Mammary epithelial cell (primary cell): ENCODE measurements at regions of chr9 and their contacts with region 1.

Region 1: DNA sequence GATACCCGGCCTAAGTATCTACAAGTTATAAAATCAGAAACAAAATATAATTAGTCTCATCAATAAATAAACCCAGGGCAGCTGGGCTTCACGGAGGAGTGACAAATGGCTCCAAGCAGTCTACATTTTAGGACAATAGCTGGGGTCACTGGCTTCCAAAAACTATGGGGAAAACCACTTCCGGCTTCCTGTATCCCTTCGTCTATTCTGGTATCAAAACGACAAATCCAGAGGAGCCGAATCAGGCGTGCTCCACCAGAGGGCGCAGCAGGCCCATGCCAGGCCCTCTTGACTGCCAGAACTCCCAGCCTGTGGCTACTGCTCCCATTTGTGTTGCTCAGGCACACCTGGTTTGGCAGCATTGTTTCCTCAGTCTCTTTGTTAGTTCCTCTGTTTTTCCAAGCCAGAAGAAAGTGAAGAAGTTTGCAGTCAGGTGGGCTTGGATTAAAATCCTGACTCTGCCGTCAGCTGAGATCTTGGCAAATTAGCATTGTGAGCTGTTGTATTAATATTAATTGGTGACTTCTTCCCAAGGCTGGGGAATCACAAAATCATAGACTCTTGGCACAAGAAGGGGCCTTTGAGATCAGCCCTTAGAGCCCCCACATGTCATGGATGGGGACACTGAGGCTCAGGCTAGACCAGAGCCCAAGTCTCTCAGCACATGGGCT is 11.6 kb upstream of the RAB14 start:
- DNase-seq: peak; percentile 81
- H3K4me3 ChIP-seq: no peak overlapping the region
- H3K27ac ChIP-seq: no peak overlapping the region
- H3K4me1 ChIP-seq: peaks cover 10% of the 10 kb centered on the region
- H3K27me3 ChIP-seq: no peaks in the 10 kb centered on the region
- CTCF ChIP-seq: peak; percentile 97 to 99

Region 2: DNA sequence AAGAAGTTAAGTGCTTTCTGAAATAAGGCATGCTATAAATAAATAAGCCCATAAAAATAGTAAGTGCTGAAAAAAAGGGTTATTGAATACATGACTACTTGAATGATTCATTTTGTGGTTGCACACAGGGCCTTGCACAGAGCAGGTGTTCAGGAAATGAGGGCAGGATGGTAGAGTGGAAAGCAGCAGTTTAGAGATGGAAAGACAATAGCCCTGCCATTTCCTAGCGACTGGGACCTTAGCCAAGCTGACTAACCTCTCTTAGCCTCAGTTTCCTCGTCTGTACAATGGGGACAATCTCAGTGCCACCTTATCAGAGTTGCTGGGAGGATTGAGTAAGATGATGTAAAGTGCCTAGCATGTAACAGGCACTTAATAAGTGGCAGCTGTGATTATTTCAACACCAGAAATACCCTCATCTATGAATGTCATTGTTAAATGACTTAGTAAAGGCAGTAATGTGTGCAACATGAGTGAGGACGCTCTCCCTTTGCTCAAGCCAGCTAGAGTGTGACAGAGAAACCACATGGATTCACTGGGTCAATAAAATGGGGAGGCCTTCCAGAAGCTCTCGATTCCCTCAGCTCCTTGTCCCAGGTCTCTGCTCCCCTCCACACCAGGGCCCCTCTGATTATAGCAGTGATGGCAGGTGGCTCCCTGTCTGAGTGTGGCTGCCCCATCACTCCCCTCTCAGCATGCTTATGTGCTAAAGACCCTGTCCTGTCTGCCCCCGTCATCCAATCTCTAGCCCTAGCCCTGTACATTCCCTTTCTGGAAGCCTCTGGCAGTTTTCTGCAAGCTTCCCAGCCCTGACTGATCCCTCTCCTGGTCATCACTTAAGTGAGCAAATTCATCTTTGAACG is 320.3 kb before region 1 on chr9:
- CTCF ChIA-PET with region 1: no interaction called
- dilution Hi-C with region 1: no loop called
- in situ Hi-C with region 1: no loop called
- intact Hi-C with region 1: no loop called
- DNase-seq: peak; percentile 91
- H3K4me3 ChIP-seq: no peak overlapping the region
- H3K27ac ChIP-seq: no peak overlapping the region
- H3K4me1 ChIP-seq: peaks cover 18% of the 10 kb centered on the region
- H3K27me3 ChIP-seq: peaks cover 3% of the 10 kb centered on the region
- CTCF ChIP-seq: no peak

Region 3: GRCh38 chr9:121278535-121279261 is 65.4 kb after region 1 on chr9:
- CTCF ChIA-PET with region 1: no interaction called
- dilution Hi-C with region 1: no loop called
- in situ Hi-C with region 1: loop called in 1 of 2 experiments (anchors 10 kb)
- intact Hi-C with region 1: loop called (anchors 2 kb)
- DNase-seq: peak; percentile 98
- H3K4me3 ChIP-seq: no peak overlapping the region
- H3K27ac ChIP-seq: peak overlapping the region; percentile 90
- H3K4me1 ChIP-seq: peaks cover 76% of the 10 kb centered on the region
- H3K27me3 ChIP-seq: no peaks in the 10 kb centered on the region
- CTCF ChIP-seq: peak; percentile 82 to 88

Region 4: GRCh38 chr9:121321016-121321503 is 107.8 kb after region 1 on chr9:
- CTCF ChIA-PET with region 1: no interaction called
- dilution Hi-C with region 1: no loop called
- in situ Hi-C with region 1: loop called in 1 of 2 experiments (anchors 10 kb)
- intact Hi-C with region 1: loop called (anchors 1 kb)
- DNase-seq: no peak
- H3K4me3 ChIP-seq: no peak overlapping the region
- H3K27ac ChIP-seq: no peak overlapping the region
- H3K4me1 ChIP-seq: peaks cover 20% of the 10 kb centered on the region
- H3K27me3 ChIP-seq: no peaks in the 10 kb centered on the region
- CTCF ChIP-seq: no peak

Region 5: DNA sequence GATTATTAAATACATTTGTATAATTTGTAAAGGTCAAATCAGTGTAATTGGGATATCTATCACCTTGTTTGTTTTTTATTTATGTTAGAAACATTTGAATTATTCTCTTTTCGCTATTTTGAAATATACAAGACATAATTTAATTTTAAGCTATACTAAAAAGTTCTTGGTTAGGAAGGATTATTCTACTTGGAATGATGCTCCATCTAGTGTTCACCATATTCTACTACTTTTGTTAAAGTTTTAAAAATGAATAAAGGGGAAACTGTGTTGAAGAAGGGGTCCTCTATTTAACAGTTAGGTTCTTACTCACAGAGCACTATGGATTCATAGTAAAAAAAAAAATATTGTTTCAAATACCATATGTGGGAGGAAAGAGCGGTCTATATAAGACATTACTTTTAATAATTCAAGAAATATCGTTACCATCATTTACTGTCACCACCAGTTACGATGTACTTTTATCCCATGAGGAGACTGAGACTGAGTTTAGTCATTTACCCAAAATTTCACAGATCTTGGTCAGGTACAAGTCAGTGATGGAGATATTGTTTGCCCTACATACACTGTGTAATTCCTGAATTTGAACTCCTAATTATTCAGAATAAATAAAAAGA is 163.1 kb after region 1 on chr9:
- CTCF ChIA-PET with region 1: no interaction called
- dilution Hi-C with region 1: no loop called
- in situ Hi-C with region 1: loop called in 1 of 2 experiments (anchors 10 kb)
- intact Hi-C with region 1: loop called (anchors 1 kb)
- DNase-seq: no peak
- H3K4me3 ChIP-seq: no peak overlapping the region
- H3K27ac ChIP-seq: no peak overlapping the region
- H3K4me1 ChIP-seq: peaks cover 39% of the 10 kb centered on the region
- H3K27me3 ChIP-seq: no peaks in the 10 kb centered on the region
- CTCF ChIP-seq: peak; percentile 12 to 51

Region 6: GRCh38 chr9:121538246-121538645 is 325.0 kb after region 1 on chr9:
- CTCF ChIA-PET with region 1: no interaction called
- dilution Hi-C with region 1: no loop called
- in situ Hi-C with region 1: no loop called
- intact Hi-C with region 1: loop called (anchors 1 kb)
- DNase-seq: no peak
- H3K4me3 ChIP-seq: no peak overlapping the region
- H3K27ac ChIP-seq: no peak overlapping the region
- H3K4me1 ChIP-seq: no peaks in the 10 kb centered on the region
- H3K27me3 ChIP-seq: no peaks in the 10 kb centered on the region
- CTCF ChIP-seq: peak; percentile 13 to 47